PC-9 (cell line): ENCODE measurements at regions of chr16 and their contacts with region 1.

Region 1: GRCh38 chr16:88452482-88453216 is 431 bp upstream of the ZFPM1 start:
- DNase-seq: peak; percentile 79 to 99
- H3K4me3 ChIP-seq: peak overlapping the region; percentile 81
- H3K27ac ChIP-seq: no peak overlapping the region
- H3K4me1 ChIP-seq: peaks cover 27% of the 10 kb centered on the region
- H3K27me3 ChIP-seq: peaks cover 17% of the 10 kb centered on the region
- CTCF ChIP-seq: no peak

Region 2: GRCh38 chr16:88464447-88465318 is 12.0 kb after region 1 on chr16:
- CTCF ChIA-PET with region 1: interaction called, 7 read pairs
- POLR2A ChIA-PET with region 1: interaction called, 11 read pairs
- intact Hi-C with region 1: no loop called
- DNase-seq: no peak
- H3K4me3 ChIP-seq: no peak overlapping the region
- H3K27ac ChIP-seq: no peak overlapping the region
- H3K4me1 ChIP-seq: no peaks in the 10 kb centered on the region
- H3K27me3 ChIP-seq: no peaks in the 10 kb centered on the region
- CTCF ChIP-seq: no peak

Region 3: GRCh38 chr16:88886845-88887521 is 434.3 kb after region 1 on chr16:
- CTCF ChIA-PET with region 1: no interaction called
- POLR2A ChIA-PET with region 1: no interaction called
- intact Hi-C with region 1: no loop called
- DNase-seq: no peak
- H3K4me3 ChIP-seq: no peak overlapping the region
- H3K27ac ChIP-seq: no peak overlapping the region
- H3K4me1 ChIP-seq: no peaks in the 10 kb centered on the region
- H3K27me3 ChIP-seq: peaks cover 5% of the 10 kb centered on the region; the same call in 1 of the 2 replicates
- CTCF ChIP-seq: no peak